Activated naive CD4-positive, alpha-beta T cell treated with anti-CD3 and anti-CD28 coated beads for 36 hours (primary cell): ENCODE measurements at regions of chr6 and their contacts with region 1.

Region 1: DNA sequence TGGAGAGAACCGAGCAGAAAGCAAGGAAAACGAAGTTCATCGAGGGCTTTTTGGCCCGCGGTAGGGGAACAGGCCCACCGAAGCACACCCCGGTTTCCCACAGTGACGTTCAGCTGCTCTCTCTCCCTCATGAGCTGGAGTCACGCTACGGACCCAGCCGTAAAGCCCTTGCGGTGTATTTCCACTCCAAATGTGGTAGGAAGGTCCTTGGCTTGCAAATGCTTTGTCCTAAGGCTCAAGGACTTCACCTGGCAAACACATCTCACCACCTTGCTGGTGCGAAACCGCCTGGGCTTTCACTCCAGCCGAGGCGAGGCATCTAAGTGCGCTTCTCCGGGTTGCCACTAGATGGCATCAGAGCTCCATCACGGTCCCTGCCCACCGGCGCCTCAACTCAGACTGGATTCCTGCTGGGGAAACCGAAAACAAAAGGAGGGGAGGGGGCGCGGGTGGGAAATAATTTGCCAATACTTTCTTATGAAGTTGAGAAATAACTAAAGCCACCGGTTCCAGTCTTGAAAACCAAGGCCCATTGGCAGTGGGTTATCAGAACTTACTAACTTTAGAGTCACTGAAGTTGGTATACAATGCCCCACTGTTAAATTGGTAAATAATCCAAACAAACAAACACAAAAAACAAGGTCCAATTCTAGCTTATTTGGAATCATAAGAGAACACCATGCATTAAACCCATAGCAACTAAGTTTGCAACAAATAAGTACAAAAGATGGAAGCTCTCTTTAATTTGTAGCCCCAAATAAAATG is 13.4 kb upstream of the FOXC1 start:
- DNase-seq: peak; percentile 70
- H3K4me3 Mint-ChIP-seq: no peak overlapping the region
- H3K27ac Mint-ChIP-seq: no peak overlapping the region
- H3K4me1 Mint-ChIP-seq: peaks cover 5% of the 10 kb centered on the region
- H3K27me3 Mint-ChIP-seq: peaks cover 56% of the 10 kb centered on the region

Region 2: DNA sequence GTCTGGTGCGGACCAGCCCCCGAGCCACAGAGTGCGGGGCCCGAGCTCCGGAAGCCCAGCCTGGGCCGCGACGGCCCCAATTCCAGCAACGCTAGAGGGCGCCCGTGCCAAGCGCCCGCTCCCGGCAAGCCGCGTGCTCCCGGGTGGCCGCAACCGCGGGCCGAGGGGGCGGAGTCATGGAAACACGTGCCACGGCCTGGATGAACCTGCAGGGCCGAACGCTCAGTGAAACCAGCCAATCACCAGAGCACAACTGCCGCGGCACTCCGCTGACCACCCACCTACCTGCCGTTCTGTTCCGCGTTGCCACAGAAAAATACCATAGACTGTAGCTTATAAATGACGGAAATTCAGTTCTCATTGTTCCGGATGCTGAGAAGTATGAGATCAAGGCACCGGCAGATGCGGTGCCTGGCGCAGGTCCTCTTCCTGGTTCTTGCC is 72.2 kb before region 1 on chr6:
- CTCF ChIA-PET with region 1: interaction called, 10 read pairs
- intact Hi-C with region 1: loop called (anchors 5 kb)
- DNase-seq: peak; percentile 78
- H3K4me3 Mint-ChIP-seq: peak overlapping the region; percentile 51
- H3K27ac Mint-ChIP-seq: no peak overlapping the region
- H3K4me1 Mint-ChIP-seq: peaks cover 30% of the 10 kb centered on the region
- H3K27me3 Mint-ChIP-seq: peaks cover 3% of the 10 kb centered on the region

Region 3: DNA sequence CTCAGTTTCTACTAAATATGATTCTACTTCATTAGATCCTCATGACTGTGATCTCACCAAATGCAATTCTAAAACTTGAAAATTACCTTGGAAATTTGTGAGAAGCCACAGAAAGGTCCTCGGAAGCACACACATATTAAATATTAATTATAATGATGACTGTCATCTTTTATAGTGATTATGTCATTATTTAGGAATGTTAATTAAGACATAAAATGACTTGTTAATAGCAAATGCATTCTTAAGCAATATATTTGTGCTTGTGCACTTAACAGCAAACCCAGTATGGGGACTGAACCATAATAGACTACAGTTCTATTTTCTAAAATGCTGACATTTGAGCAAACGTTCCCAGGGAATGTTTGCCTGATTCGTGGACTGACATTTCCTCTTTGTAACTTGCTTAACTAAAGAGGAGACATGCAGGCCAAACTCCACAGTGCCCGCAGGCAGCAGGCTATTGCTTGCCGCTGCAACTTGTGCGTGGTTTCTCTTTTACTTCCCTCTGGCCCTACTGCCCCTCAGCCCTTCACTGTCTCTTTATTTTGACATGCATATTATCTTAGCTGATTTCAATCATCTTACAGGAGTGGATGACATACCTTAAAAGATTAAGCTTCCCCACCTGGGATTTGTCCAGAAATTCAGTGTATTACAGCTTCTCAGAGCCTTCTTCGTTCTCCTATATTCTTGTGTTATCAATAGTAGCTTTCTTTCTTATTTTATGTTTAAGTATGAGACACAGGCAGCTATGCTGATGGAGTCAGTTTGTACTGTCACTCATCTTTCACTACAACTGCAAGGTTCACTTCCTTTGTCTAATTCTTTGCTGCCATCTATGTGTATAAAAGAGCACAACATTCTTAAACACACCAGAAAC is 507.6 kb after region 1 on chr6:
- CTCF ChIA-PET with region 1: interaction called, 3 read pairs
- intact Hi-C with region 1: loop called (anchors 2 kb)
- DNase-seq: no peak
- H3K4me3 Mint-ChIP-seq: no peak overlapping the region
- H3K27ac Mint-ChIP-seq: no peak overlapping the region
- H3K4me1 Mint-ChIP-seq: no peaks in the 10 kb centered on the region
- H3K27me3 Mint-ChIP-seq: no peaks in the 10 kb centered on the region

Region 4: DNA sequence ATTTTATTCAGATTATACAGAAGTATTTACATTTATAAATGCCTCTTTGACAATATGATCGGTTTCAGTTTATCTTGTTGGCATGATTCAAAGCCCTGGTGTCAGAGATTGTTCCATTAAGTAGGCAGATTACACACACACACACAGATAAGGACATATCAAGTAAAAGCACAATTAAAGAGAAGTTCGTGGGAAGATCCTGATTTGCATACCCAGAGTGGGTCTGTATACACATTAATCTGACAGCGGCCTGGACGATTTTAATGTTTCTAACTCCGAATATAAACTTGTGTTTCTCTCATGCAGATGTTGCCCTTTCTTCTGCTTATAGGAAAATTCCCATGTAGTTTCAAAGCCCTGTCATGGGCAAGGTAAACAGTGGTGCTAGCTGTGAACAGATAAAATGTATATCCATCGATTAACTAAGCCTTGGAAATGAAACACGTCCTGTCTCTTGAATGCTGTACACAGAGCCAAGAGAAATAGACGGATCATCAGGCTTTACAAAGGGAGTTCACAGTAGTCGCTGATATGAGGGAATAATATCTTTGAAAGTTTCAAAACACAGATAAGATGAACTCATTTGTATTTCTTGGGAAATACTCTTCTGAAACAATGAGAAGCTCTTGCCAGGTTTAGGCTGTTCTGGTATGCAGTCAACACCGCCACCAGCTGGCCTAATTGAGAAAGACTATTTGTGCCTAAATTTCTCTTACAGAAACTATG is 757.3 kb after region 1 on chr6:
- CTCF ChIA-PET with region 1: interaction called, 12 read pairs
- intact Hi-C with region 1: loop called (anchors 2 kb)
- DNase-seq: peak; percentile 84
- H3K4me3 Mint-ChIP-seq: no peak overlapping the region
- H3K27ac Mint-ChIP-seq: no peak overlapping the region
- H3K4me1 Mint-ChIP-seq: no peaks in the 10 kb centered on the region
- H3K27me3 Mint-ChIP-seq: no peaks in the 10 kb centered on the region

Region 5: GRCh38 chr6:2634139-2634964 is 1038.1 kb after region 1 on chr6:
- CTCF ChIA-PET with region 1: interaction called, 12 read pairs
- intact Hi-C with region 1: loop called (anchors 1 kb)
- DNase-seq: peak; percentile 88
- H3K4me3 Mint-ChIP-seq: peak overlapping the region; percentile 58
- H3K27ac Mint-ChIP-seq: no peak overlapping the region
- H3K4me1 Mint-ChIP-seq: peaks cover 3% of the 10 kb centered on the region
- H3K27me3 Mint-ChIP-seq: peaks cover 11% of the 10 kb centered on the region